ENCODE measurements at regions of chr1 and their contacts with region 1.

Region 1: DNA sequence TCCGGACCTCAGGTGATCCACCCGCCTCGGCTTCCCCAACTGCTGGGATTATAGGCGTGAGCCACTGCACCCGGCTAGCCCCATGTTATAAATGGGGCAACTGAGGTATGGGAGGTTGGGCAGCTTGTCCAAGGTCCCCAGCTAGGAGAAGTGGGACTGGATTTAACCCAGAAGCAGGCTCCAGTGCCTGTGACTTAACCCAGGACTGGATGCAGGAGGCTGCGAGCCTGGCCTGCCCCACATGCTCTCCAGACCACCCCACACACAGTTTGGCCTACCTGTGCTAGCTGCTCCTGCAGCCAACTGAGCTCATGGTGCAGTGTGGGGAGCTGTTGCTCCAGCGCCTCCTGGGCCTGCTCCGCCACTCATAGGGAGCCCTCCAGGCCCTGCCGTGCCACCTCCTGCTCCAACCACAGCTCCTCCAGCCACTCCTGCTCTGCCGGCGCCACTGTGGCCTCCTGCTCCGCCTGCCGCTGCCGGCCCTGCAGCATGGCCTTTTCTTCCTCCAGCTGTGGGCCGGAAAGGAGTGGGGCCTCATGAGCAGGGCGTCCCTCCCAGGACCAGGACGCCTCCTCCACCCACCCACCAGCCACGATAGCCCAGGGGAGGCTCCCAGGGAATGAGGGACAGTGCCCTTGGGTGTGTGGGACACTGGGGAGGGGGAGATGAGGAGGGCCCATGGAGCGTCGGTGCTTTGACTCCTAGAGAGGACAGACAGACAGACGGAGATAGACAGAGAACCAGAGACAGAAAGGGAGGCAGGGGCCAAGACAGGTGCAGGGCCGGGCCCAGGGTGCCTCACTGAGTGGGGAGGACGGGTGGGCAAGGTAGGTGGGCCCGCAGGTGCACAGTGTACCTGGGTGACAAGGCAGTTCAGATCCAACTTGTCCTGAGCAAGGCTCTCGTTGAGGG is 12.4 kb upstream of the NBPF1 start:
- DNase-seq: no peak
- H3K4me3 Mint-ChIP-seq: no peak overlapping the region
- H3K27ac Mint-ChIP-seq: no peak overlapping the region
- H3K4me1 Mint-ChIP-seq: peaks cover 3% of the 10 kb centered on the region
- H3K27me3 Mint-ChIP-seq: no peaks in the 10 kb centered on the region

Region 2: DNA sequence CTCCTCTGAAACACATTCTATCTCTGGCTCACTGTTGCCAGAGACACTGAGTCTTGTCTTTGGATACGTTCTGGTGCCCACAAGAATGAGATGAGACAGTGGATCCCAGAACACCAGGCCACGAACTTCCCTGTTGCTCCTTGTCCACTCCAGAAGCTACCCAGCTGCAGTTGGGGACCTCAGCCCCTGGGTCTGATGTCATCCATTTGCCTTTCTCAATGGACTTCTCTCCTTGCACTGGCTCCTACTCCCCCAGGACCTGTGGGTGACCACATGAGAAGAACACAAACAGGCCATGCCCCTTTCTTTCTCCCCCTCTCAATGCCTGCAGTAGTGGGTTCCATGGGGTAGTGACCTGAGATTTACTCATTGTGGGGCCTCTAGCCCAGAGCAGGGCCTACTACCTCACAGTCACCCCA is 18.3 kb before region 1 on chr1:
- CTCF ChIA-PET with region 1: interaction called, 29 read pairs
- POLR2A ChIA-PET with region 1: interaction called, 5 read pairs
- DNase-seq: peak; percentile 16
- H3K4me3 Mint-ChIP-seq: no peak overlapping the region
- H3K27ac Mint-ChIP-seq: no peak overlapping the region
- H3K4me1 Mint-ChIP-seq: no peaks in the 10 kb centered on the region
- H3K27me3 Mint-ChIP-seq: peaks cover 2% of the 10 kb centered on the region

Region 3: GRCh38 chr1:16613185-16614147 is 12.3 kb before region 1 on chr1 and contains the start of gene NBPF1:
- CTCF ChIA-PET with region 1: interaction called, 29 read pairs
- POLR2A ChIA-PET with region 1: interaction called, 5 read pairs
- DNase-seq: peak; percentile 76
- H3K4me3 Mint-ChIP-seq: no peak within 1 kb of the TSS
- H3K27ac Mint-ChIP-seq: no peak within 1 kb of the TSS
- H3K4me1 Mint-ChIP-seq: no peaks in the 10 kb centered on the region
- H3K27me3 Mint-ChIP-seq: no peaks in the 10 kb centered on the region
- total RNA-seq, gene NBPF1: 1.7 to 2.2 TPM

Region 4: DNA sequence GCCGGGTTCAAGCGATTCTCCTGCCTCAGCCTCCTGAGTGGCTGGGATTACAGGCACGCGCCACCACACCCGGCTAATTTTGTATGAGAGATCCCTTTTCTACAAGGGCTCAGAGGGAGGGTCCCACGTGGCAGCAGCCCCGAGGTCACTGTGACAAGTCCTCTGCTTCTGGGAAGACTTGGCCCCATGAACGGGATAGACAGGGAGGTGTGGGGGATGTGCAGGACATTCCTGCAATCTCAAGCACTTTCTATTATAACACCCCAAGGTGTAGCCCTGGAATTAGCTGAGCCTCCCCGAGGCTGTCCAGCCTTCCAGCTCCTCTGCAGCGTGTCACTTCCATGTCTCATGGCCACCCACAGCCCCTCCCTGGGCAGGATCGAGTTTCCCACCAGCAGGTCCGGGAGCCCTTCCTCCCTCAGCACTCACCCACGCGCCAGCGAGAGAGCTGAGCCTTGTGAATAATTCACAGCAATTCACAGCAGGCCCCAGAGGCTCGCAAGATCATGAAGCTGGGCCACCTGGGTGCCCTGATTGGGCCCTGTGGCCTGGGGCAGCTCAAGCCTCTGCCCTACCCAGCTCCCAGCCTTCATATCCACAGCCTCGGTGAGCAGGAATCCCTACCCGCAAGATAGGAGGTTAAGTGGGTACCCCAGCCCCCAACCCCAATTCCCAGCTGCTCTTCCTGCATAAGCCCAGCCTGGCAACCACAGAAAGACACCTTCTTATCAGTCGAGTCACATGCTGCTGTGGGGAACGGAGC is 91.8 kb after region 1 on chr1:
- CTCF ChIA-PET with region 1: no interaction called
- POLR2A ChIA-PET with region 1: no interaction called
- DNase-seq: peak; percentile 14
- H3K4me3 Mint-ChIP-seq: no peak overlapping the region
- H3K27ac Mint-ChIP-seq: no peak overlapping the region
- H3K4me1 Mint-ChIP-seq: no peaks in the 10 kb centered on the region
- H3K27me3 Mint-ChIP-seq: peaks cover 34% of the 10 kb centered on the region

Region 5: GRCh38 chr1:16960560-16961296 is 335.0 kb after region 1 on chr1:
- CTCF ChIA-PET with region 1: interaction called, 21 read pairs
- POLR2A ChIA-PET with region 1: no interaction called
- DNase-seq: peak; percentile 86
- H3K4me3 Mint-ChIP-seq: peak overlapping the region; percentile 70
- H3K27ac Mint-ChIP-seq: peak overlapping the region; percentile 62
- H3K4me1 Mint-ChIP-seq: peaks cover 13% of the 10 kb centered on the region
- H3K27me3 Mint-ChIP-seq: no peaks in the 10 kb centered on the region